Head of caudate nucleus (tissue), 42 donors: ENCODE measurements at regions of chr2 and their contacts with region 1.

Region 1: GRCh38 chr2:99337113-99338028 is at the start of gene EIF5B:
- DNase-seq: peak; percentile 93 to 99 (median 97)

Region 2: GRCh38 chr2:99154643-99155536 is 182.5 kb before region 1 on chr2 and contains the starts of genes LIPT1 and TSGA10:
- intact Hi-C with region 1: loop called (anchors 10 kb)
- DNase-seq: peak; percentile 81 to 97 (median 92)

Region 3: DNA sequence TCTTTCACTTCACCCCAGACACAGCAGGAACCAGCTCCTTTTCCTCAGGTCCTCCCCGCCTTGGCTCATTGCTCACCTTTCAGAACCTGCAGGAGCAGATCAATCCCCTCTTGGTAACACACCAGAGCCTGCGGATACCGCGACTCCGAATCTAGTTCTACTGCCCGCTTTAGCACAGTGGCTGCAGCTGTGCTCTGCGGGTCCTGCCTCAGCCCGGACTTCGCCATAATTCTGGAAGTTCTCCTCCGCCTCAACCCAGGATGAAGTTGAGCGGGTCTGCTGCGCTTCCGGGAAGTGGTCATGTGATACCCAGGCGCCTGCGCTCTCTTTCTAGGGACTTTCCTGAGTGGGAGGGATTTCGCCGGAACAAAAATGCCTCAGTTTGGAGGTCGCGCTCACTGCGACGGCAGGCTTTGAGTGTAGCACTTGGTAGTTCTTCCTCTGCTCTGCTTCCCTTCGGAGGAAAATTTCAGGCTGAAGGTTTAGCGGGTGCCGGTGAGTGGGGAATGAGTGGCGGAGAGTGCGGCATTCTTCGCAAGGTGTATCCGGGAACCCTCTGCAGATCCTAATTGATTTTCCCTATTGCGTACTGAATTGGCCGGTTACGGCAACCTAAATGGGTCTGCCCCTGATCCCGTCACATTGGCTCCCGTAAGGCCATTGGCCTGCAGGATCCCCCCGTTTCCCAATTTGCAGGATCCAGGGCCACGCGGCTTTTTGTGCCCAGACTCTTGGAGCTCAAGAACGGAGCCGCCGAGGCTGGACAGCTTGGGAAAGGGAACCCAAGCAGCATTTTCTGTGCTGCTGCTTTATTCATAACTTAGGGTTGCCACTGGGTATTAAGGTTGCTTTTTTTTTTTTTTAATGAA is 156.4 kb before region 1 on chr2 and contains the starts of genes MITD1 and MRPL30:
- intact Hi-C with region 1: loop called (anchors 2 kb)
- DNase-seq: peak; percentile 87 to 98 (median 95)

Region 4: DNA sequence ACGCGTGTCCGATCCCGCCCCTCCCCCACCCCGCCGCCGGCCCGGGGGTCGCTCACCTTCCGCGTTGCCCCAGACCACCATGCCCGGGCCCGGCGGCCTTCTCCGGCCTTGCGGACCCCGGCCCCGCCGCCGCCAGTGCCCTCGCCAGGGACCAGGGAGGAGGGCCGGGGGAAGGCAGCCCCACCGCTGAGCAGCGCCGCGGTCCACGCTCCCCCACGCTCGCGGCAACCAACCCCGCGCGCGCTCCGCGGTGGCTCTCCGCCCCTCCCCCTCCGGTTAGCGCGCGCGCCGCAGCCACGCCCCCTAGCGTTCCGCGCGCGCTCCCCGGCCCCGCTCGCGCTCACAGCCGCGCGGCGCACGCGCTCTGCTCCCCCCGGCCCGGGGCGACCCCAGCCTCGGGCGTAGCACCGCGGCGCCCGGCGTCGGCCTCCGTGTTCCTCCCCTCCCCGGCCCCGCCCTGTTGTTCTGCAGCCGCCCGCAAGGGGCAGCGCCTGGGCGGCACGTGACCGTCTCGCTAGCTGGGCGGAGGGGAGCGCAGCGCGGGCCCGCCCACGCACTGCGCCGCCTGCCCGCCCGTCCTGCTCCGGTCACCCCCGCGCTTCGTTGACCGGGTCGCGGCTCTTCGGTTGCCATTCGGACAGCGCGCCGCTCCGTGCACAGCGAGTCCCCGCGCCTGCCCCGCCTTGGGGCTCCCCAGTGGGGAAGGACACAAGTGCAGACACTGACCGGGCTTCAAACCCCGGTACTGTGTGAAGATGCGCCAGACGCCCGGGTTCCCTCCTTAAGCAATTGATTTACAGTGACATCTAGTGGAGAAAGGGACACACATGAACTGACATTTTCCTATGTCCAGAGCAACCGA is 152.6 kb after region 1 on chr2 and contains the start of gene REV1:
- intact Hi-C with region 1: loop called (anchors 1 kb)
- DNase-seq: peak; percentile 78 to 96 (median 91)